A549 (cell line): ENCODE measurements at regions of chr10 and their contacts with region 1.

Region 1: GRCh38 chr10:116787893-116788665 is 45.7 kb upstream of the HSPA12A start:
- DNase-seq: peak; percentile 49 to 62
- ATAC-seq: peak; percentile 82 to 94
- H3K4me3 ChIP-seq: peak overlapping the region; percentile 40
- H3K27ac ChIP-seq: peak overlapping the region in 1 of 2 experiments; percentile 62; a peak in 3 of 6 replicates
- H3K4me1 ChIP-seq: no peaks in the 10 kb centered on the region
- CTCF ChIP-seq: peak; percentile 96
- EP300 ChIP-seq: no peak
- POLR2A ChIP-seq: no peak
- RAD21 ChIP-seq: peak; percentile 86 to 96

Region 2: GRCh38 chr10:116627386-116627933 is 160.6 kb before region 1 on chr10:
- CTCF ChIA-PET with region 1: interaction called, 89 read pairs
- POLR2A ChIA-PET with region 1: no interaction called
- DNase-seq: peak; percentile 44 to 48
- ATAC-seq: peak; percentile 92 to 97
- H3K4me3 ChIP-seq: peak overlapping the region; percentile 56
- H3K27ac ChIP-seq: peak overlapping the region; percentile 58 to 74; a peak in 4 of 6 replicates
- H3K4me1 ChIP-seq: no peaks in the 10 kb centered on the region
- CTCF ChIP-seq: peak; percentile 52
- EP300 ChIP-seq: no peak
- POLR2A ChIP-seq: no peak
- RAD21 ChIP-seq: peak; percentile 47 to 67

Region 3: DNA sequence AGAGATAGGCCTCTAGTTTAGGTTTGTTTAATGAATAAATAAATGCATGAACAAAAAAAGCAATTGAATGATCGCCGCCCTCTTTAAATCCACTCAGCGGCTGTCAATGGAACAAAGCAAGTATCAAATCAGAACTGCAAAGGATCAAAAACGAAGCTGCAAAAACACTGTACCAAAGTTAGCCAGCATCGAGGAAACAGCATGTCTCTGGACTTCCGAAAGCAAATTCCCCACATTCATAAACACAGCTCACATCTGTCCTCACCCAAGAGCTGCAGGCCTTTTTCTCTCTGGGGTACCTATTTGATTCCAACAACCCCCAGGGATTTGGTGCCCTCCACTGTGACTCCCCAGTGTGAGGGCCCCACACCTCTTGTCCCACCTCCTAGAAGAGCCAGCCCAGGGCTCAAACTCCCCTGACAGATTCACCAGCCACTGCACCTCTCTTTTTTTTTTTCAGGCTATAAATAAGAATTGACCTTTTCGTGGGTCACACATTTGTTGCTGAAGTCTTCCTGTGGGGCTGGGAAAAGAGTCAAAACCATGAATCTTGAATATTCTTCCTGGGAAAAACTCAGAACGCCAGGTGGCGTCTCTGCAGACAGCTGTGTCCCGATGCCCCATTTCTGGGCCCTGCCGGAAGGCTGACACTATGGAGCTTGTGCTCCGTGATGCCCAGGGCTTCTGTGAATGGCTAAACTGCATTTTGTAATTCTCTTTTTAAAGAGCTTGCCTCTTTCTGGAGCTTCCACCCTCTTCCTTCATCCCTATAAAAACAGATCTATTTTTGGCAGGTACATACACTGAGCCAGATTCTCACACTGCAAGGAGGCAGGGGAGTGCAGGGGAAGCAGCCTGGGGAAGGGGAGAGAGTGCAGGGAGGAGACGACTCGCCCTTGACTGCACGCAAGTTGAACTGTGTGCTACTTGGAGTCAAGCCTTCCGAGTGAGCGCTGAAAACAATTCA is 97.4 kb before region 1 on chr10:
- CTCF ChIA-PET with region 1: interaction called, 277 read pairs
- POLR2A ChIA-PET with region 1: no interaction called
- DNase-seq: no peak
- ATAC-seq: peak in 1 of 2 experiments; percentile 53; a peak in 2 of 6 replicates
- H3K4me3 ChIP-seq: no peak overlapping the region
- H3K27ac ChIP-seq: no peak overlapping the region
- H3K4me1 ChIP-seq: no peaks in the 10 kb centered on the region
- CTCF ChIP-seq: peak; percentile 2; the same call in 1 of the 3 replicates
- EP300 ChIP-seq: no peak
- POLR2A ChIP-seq: no peak
- RAD21 ChIP-seq: peak; percentile 21 to 22; a peak in 1 of 5 replicates

Region 4: DNA sequence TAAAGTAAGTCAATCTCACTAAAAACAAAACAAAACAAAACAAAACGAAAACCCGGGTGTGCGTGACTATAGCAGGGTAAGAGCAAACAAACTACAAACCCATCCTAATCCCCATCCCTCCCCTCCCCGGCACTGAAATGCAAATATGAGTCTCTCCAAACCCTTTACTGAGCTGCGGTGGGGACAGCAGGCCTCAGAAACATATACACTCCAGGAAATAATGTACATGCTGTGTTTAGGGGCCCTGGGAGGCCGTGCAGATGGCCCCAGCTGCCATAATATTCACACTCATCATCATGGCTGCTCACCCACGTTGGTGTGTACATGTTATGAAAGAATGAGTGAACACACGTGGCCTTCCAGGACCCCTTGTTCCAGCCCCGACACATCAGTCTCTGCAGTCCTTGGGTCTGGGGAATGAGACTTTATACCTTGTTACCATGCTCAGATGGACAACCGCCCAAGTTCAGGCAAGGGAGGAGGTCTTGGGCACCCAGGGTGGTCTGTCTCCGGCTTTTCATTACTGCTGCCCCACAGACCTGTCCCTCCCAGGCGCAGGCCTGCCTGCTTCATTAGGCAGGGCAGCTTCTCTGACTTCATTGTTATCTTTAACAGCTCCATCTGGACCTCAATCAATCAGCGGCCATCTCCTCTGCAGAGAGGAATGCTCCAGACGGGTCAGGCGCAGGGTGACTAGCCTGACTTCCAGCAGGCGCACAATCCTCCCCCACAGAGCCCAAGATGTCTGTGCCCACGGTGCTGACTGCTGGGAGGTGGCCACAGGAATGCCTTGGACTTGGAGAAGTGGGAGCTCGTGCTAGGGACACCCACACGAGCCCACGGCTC is 66.3 kb before region 1 on chr10:
- CTCF ChIA-PET with region 1: interaction called, 18 read pairs
- POLR2A ChIA-PET with region 1: no interaction called
- DNase-seq: no peak
- ATAC-seq: no peak
- H3K4me3 ChIP-seq: no peak overlapping the region
- H3K27ac ChIP-seq: no peak overlapping the region; a peak in 1 of 6 replicates
- H3K4me1 ChIP-seq: peaks cover 15% of the 10 kb centered on the region; the same call in 2 of the 3 replicates
- CTCF ChIP-seq: no peak
- EP300 ChIP-seq: no peak
- POLR2A ChIP-seq: no peak
- RAD21 ChIP-seq: no peak

Region 5: GRCh38 chr10:116748041-116748440 is 40.0 kb before region 1 on chr10:
- CTCF ChIA-PET with region 1: interaction called, 22 read pairs
- POLR2A ChIA-PET with region 1: interaction called, 17 read pairs
- DNase-seq: peak; percentile 44 to 55
- ATAC-seq: peak; percentile 32 to 56; a peak in 3 of 6 replicates
- H3K4me3 ChIP-seq: no peak overlapping the region
- H3K27ac ChIP-seq: peak overlapping the region; percentile 65 to 72
- H3K4me1 ChIP-seq: peaks cover 29% of the 10 kb centered on the region
- CTCF ChIP-seq: no peak
- EP300 ChIP-seq: no peak
- POLR2A ChIP-seq: no peak
- RAD21 ChIP-seq: no peak

Region 6: GRCh38 chr10:116771101-116771958 is 16.7 kb before region 1 on chr10:
- CTCF ChIA-PET with region 1: interaction called, 133 read pairs
- POLR2A ChIA-PET with region 1: no interaction called
- DNase-seq: peak; percentile 68 to 79
- ATAC-seq: peak; percentile 65 to 84
- H3K4me3 ChIP-seq: no peak overlapping the region
- H3K27ac ChIP-seq: peak overlapping the region; percentile 78 to 87
- H3K4me1 ChIP-seq: peaks cover 64% of the 10 kb centered on the region
- CTCF ChIP-seq: no peak
- EP300 ChIP-seq: peak in 1 of 2 experiments; percentile 28; a peak in 1 of 5 replicates
- POLR2A ChIP-seq: no peak
- RAD21 ChIP-seq: no peak

Region 7: DNA sequence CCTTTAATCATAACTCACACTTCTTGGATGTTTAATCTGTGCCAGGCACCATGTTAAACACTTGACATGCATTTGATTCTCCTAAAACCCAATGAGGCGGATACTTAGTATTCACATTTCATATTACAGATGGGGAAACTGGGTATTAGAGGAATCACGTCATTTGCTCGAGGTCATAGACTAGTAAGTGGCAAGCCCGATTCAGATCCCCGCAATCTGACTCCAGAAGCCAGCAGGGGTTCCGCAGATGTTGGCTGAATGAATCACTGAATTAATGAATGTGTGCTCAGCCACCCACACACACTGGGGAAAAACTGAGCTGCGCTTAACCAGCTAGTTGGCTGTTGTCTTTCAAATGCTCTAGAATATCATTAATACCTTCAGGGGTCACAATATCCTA is 38.7 kb after region 1 on chr10:
- CTCF ChIA-PET with region 1: interaction called, 11 read pairs
- POLR2A ChIA-PET with region 1: no interaction called
- DNase-seq: no peak
- ATAC-seq: peak in 1 of 2 experiments; percentile 24; a peak in 2 of 6 replicates
- H3K4me3 ChIP-seq: no peak overlapping the region
- H3K27ac ChIP-seq: no peak overlapping the region
- H3K4me1 ChIP-seq: 0 out of 3 replicates have a peak, but pooled peaks cover 3% of the 10 kb centered on the region
- CTCF ChIP-seq: no peak
- EP300 ChIP-seq: no peak
- POLR2A ChIP-seq: no peak
- RAD21 ChIP-seq: no peak

Region 8: GRCh38 chr10:116878124-116878523 is 90.0 kb after region 1 on chr10:
- CTCF ChIA-PET with region 1: no interaction called
- POLR2A ChIA-PET with region 1: no interaction called
- DNase-seq: no peak
- ATAC-seq: peak in 1 of 2 experiments; percentile 45; a peak in 3 of 6 replicates
- H3K4me3 ChIP-seq: no peak overlapping the region
- H3K27ac ChIP-seq: no peak overlapping the region
- H3K4me1 ChIP-seq: no peaks in the 10 kb centered on the region
- CTCF ChIP-seq: no peak
- EP300 ChIP-seq: no peak
- POLR2A ChIP-seq: no peak
- RAD21 ChIP-seq: no peak